SK-N-SH (cell line): ENCODE measurements at regions of chr9 and their contacts with region 1.

Region 1: DNA sequence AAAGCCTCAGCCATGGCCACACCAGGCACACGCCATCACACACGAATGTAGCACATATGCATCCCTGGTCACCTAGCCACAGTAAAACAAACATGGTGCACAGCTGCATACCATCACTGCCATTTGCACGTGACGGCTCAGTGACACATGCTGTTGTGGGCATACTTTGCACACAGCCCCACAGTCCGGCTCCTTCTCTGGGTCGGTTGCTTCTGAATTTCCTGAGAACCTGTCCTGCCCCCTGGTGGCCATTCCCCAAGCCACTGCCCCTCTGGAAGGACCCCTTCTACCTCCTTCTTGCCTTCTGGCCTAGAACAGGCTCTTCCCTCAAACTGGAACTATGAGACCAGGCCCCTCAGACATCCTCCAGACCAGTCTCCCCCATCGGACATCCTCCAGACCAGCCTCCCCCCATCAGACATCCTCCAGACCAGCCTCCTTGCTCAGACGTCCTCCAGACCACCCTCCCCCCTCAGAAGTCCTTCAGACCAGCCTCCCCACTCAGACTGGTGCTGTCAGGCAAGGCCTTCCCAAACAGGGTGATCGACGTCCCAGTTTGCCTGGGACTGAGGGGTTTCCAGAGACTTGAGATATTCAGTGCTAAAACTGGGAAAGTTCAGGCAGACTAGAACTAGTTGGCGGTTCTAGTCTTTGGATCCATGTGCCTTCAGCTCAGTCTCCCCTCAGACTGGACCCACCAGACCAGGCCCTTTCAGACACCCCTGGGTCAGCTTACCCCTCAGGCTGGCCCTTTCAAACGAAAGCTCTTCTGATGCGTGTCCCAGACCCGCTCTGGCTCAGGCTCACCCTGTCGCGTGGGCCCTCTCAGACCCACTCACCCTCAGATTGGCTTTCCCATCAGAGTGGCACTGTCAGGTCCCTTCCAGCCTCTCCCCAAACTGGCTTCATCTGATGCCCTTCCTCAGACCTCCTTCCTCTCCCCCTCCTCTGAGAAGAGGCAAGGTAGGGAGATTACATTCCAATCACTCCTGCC is 24.3 kb upstream of the ENHO start:
- DNase-seq: peak; percentile 65
- H3K4me3 ChIP-seq: peak overlapping the region in 1 of 2 experiments; percentile 40; a peak in 1 of 4 replicates
- H3K27ac ChIP-seq: peak overlapping the region in 1 of 2 experiments; percentile 74; a peak in 2 of 4 replicates
- H3K4me1 ChIP-seq: peaks cover 0 to 37% of the 10 kb centered on the region in 2 experiments; a peak in 1 of 4 replicates
- H3K27me3 ChIP-seq: peaks cover 5% of the 10 kb centered on the region; the same call in 1 of the 2 replicates
- CTCF ChIP-seq: peak; percentile 79
- EP300 ChIP-seq: no peak
- RAD21 ChIP-seq: peak; percentile 67

Region 2: DNA sequence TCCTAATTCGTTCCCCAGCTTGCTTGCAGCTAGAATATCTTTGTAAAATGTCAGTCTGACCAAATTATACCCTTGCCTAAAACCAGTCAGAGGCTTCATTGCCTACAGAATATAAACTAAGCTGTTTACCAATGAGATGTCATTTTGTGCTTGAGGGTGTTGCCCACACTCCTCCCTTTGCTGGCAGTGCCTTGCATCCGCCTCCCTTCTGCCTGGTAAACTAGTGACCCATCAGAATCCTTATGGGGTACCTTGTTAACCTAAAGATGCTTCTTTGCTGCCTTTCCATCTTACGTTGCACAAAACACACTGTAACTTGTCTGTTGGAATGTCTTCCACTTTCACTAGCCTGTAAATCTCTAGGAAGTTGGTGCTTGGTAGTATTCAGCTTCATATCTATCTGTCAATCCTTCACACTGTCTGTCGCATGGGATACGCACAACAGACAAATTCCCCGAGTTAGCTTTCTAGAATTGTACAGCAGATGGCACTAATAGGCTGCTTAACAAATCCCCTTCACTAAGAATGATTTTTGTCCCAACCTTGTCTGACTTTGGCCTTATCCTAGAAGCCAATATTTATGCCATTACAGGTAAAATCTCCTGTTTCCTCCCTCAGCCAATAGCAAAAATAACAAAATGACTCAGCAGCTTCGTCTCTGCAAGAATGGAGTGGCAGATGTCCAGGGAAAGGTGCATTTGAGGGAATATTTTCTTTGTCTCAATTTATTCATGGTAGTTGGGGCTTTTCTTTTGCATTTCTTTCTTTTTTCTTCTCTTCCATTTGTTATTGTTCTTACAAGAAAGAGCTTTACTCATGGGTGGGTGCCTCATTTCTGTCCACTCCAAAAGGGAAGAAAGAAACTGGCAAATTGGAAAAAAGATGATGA is 214.8 kb before region 1 on chr9:
- CTCF ChIA-PET with region 1: interaction called, 14 read pairs
- POLR2A ChIA-PET with region 1: no interaction called
- DNase-seq: peak; percentile 46
- H3K4me3 ChIP-seq: no peak overlapping the region; a peak in 1 of 4 replicates
- H3K27ac ChIP-seq: no peak overlapping the region
- H3K4me1 ChIP-seq: peaks cover 0 to 6% of the 10 kb centered on the region in 2 experiments; a peak in 2 of 4 replicates
- H3K27me3 ChIP-seq: no peaks in the 10 kb centered on the region
- CTCF ChIP-seq: peak; percentile 62
- EP300 ChIP-seq: no peak
- RAD21 ChIP-seq: peak; percentile 88

Region 3: DNA sequence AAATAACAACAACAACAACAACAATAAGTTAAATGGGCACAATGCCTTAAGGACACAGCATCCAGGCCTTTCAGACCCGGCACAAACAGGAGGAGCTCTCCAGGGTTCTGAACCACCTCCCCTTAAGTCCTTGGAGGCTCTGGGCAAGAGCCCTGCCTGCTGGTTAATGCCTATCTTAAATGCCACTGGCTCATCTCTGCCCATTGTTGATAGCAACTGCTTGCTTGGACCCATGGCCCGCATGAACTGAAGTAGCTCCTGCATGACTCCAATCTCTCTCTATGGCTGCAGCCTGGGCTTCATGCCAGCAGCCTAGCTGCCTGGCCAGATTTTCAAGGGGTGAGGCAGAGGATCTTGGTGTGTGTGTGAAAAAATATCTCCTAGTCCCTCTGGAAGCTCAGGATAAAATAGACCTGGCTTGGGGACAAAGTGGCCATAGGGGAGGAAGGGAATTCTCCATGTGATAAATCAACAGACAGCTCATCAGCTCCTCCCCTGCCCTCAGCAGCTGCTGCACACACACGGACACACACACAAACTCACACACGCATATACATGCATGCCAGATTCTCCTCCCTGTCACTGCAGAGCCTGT is 116.2 kb before region 1 on chr9:
- CTCF ChIA-PET with region 1: interaction called, 27 read pairs
- POLR2A ChIA-PET with region 1: no interaction called
- DNase-seq: peak; percentile 79
- H3K4me3 ChIP-seq: no peak overlapping the region
- H3K27ac ChIP-seq: peak overlapping the region in 1 of 2 experiments; percentile 78; a peak in 2 of 4 replicates
- H3K4me1 ChIP-seq: peaks cover 4 to 63% of the 10 kb centered on the region in 2 experiments; a peak in 3 of 4 replicates
- H3K27me3 ChIP-seq: no peaks in the 10 kb centered on the region
- CTCF ChIP-seq: no peak
- EP300 ChIP-seq: peak in 1 of 2 experiments; percentile 71; a peak in 1 of 4 replicates
- RAD21 ChIP-seq: peak; percentile 21; the same call in 1 of the 2 replicates

Region 4: GRCh38 chr9:34451545-34451944 is 95.6 kb before region 1 on chr9:
- CTCF ChIA-PET with region 1: interaction called, 13 read pairs
- POLR2A ChIA-PET with region 1: no interaction called
- DNase-seq: no peak
- H3K4me3 ChIP-seq: no peak overlapping the region
- H3K27ac ChIP-seq: no peak overlapping the region
- H3K4me1 ChIP-seq: peaks cover 11 to 13% of the 10 kb centered on the region in 2 experiments; a peak in 2 of 4 replicates
- H3K27me3 ChIP-seq: no peaks in the 10 kb centered on the region
- CTCF ChIP-seq: no peak
- EP300 ChIP-seq: no peak
- RAD21 ChIP-seq: no peak

Region 5: DNA sequence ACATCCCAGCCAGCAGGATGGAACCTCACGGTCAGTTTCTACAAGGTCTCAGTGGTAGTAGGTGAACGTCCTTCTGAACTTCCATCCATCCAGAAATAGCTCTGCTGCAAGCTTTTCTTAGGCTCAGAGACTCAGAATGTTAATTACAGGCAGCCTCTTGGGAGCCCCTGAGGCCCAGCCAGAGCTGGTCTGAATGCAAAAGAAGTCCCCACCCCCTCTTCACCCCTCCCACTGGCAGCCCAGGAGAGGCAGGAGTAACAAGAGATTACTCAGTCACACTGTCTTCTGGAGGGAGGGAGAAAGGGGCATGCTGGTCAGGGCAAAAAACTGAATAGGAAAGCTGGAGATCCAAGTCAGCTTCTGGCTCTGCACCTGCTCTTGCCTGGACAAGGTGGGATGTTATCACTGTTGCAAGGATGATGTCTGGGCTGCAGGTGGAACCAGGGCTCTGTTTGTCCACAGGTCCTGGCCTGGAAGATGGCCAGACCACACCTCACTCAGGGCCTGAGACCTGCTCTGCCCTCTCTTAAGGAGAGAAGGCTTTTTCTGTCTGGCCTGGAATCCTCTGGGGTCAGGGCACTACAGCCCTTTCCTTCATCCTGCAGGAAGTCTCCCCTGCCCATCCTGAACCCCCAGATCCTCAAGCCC is 33.4 kb before region 1 on chr9:
- CTCF ChIA-PET with region 1: interaction called, 34 read pairs
- POLR2A ChIA-PET with region 1: interaction called, 4 read pairs
- DNase-seq: no peak
- H3K4me3 ChIP-seq: no peak overlapping the region
- H3K27ac ChIP-seq: no peak overlapping the region
- H3K4me1 ChIP-seq: peaks cover 0 to 16% of the 10 kb centered on the region in 2 experiments; a peak in 1 of 4 replicates
- H3K27me3 ChIP-seq: no peaks in the 10 kb centered on the region; the same call in 1 of the 2 replicates
- CTCF ChIP-seq: no peak
- EP300 ChIP-seq: no peak
- RAD21 ChIP-seq: no peak

Region 6: GRCh38 chr9:34570376-34570775 is 23.2 kb after region 1 on chr9:
- CTCF ChIA-PET with region 1: interaction called, 129 read pairs
- POLR2A ChIA-PET with region 1: interaction called, 3 read pairs
- DNase-seq: peak; percentile 78
- H3K4me3 ChIP-seq: no peak overlapping the region
- H3K27ac ChIP-seq: peak overlapping the region in 1 of 2 experiments; percentile 94; a peak in 2 of 4 replicates
- H3K4me1 ChIP-seq: peaks cover 0 to 98% of the 10 kb centered on the region in 2 experiments; a peak in 2 of 4 replicates
- H3K27me3 ChIP-seq: no peaks in the 10 kb centered on the region; the same call in 1 of the 2 replicates
- CTCF ChIP-seq: no peak
- EP300 ChIP-seq: no peak; a peak in 1 of 4 replicates
- RAD21 ChIP-seq: no peak

Region 7: GRCh38 chr9:34611829-34612630 is 64.9 kb after region 1 on chr9 and contains the start of gene RPP25L:
- CTCF ChIA-PET with region 1: interaction called, 88 read pairs
- POLR2A ChIA-PET with region 1: no interaction called
- DNase-seq: peak; percentile 93
- H3K4me3 ChIP-seq: peak within 1 kb of the TSS; percentile 66 to 84
- H3K27ac ChIP-seq: peak within 1 kb of the TSS; percentile 73 to 75
- H3K4me1 ChIP-seq: peaks cover 0 to 36% of the 10 kb centered on the region in 2 experiments; a peak in 1 of 4 replicates
- H3K27me3 ChIP-seq: no peaks in the 10 kb centered on the region
- CTCF ChIP-seq: no peak
- EP300 ChIP-seq: no peak
- RAD21 ChIP-seq: no peak
- polyA plus RNA-seq, gene RPP25L: 46.3 and 47.6 TPM in 2 replicates

Region 8: DNA sequence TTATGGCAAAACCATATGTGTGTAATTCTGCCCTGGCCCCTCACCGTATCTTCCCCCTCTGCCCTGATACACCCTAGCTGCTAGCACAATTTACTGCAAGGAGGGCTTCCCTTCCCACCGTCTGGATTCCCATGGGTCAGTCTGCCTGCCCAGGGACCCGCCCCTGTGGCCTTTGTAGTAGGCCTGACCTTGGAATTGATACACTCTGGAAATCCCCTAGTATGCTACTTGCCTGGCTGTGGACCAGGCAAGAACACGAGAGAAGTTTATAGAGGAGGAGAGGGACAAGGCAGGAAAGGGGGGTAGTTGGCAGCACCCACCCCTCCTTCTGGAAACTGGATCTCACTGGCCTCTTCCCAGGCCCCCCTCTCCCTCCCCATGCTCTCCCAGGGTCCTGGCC is 278.6 kb after region 1 on chr9:
- CTCF ChIA-PET with region 1: no interaction called
- POLR2A ChIA-PET with region 1: no interaction called
- DNase-seq: no peak
- H3K4me3 ChIP-seq: no peak overlapping the region
- H3K27ac ChIP-seq: no peak overlapping the region
- H3K4me1 ChIP-seq: no peaks in the 10 kb centered on the region
- H3K27me3 ChIP-seq: no peaks in the 10 kb centered on the region
- CTCF ChIP-seq: no peak
- EP300 ChIP-seq: no peak
- RAD21 ChIP-seq: no peak